Endothelial cell of umbilical vein (primary cell): ENCODE measurements at regions of chr6 and their contacts with region 1.

Region 1: GRCh38 chr6:44172731-44173500 is 14.3 kb downstream of the CAPN11 start:
- DNase-seq: peak; percentile 71
- H3K4me3 ChIP-seq: no peak overlapping the region
- H3K27ac ChIP-seq: no peak overlapping the region
- H3K4me1 ChIP-seq: peaks cover 19% of the 10 kb centered on the region
- H3K27me3 ChIP-seq: peaks cover 0 to 9% of the 10 kb centered on the region in 2 experiments
- CTCF ChIP-seq: peak; percentile 91 to 96
- POLR2A ChIP-seq: no peak

Region 2: DNA sequence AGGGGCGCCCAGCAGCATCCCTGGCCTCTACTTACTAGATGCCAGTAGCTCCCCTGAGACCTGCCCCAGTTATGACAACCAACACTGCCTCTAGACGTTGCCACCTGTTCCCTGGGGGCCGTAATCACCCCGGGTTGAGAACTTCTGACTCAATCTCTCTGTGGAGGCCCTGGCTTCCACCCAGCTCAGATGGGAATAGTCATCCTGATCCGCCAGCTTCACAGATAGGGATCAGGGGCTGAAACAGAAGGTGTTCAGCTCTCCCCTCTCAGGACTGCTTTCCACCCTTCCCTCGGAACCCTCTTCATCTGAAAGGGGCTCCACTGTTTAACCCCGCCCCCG is 10.9 kb before region 1 on chr6:
- CTCF ChIA-PET with region 1: interaction called, 23 read pairs
- POLR2A ChIA-PET with region 1: no interaction called
- dilution Hi-C with region 1: no loop called
- intact Hi-C with region 1: no loop called
- DNase-seq: no peak
- H3K4me3 ChIP-seq: no peak overlapping the region
- H3K27ac ChIP-seq: no peak overlapping the region
- H3K4me1 ChIP-seq: no peaks in the 10 kb centered on the region
- H3K27me3 ChIP-seq: peaks cover 2 to 19% of the 10 kb centered on the region in 2 experiments
- CTCF ChIP-seq: no peak
- POLR2A ChIP-seq: no peak

Region 3: DNA sequence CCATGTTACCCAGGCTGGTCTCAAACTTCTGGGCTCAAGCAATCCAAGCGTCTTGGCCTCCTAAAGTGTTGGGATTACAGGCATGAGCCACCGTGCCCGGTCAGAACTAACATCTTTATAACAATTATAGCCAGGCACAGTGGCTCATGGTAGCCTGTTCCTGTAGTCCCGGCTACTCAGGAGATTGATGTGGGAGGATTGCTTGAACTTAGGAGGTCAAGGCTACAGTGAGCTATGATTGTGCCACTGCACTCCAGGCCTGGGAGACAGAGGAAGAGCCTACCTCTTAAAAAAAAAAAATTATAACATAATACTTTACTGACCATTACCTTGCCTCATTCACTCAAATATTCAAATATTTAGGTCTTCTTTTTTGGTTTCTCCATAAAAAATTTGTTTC is 27.0 kb after region 1 on chr6:
- CTCF ChIA-PET with region 1: interaction called, 5 read pairs
- POLR2A ChIA-PET with region 1: interaction called, 3 read pairs
- dilution Hi-C with region 1: no loop called
- intact Hi-C with region 1: loop called (anchors 1 kb)
- DNase-seq: no peak
- H3K4me3 ChIP-seq: no peak overlapping the region
- H3K27ac ChIP-seq: no peak overlapping the region
- H3K4me1 ChIP-seq: peaks cover 14% of the 10 kb centered on the region
- H3K27me3 ChIP-seq: no peaks in the 10 kb centered on the region
- CTCF ChIP-seq: no peak
- POLR2A ChIP-seq: no peak

Region 4: DNA sequence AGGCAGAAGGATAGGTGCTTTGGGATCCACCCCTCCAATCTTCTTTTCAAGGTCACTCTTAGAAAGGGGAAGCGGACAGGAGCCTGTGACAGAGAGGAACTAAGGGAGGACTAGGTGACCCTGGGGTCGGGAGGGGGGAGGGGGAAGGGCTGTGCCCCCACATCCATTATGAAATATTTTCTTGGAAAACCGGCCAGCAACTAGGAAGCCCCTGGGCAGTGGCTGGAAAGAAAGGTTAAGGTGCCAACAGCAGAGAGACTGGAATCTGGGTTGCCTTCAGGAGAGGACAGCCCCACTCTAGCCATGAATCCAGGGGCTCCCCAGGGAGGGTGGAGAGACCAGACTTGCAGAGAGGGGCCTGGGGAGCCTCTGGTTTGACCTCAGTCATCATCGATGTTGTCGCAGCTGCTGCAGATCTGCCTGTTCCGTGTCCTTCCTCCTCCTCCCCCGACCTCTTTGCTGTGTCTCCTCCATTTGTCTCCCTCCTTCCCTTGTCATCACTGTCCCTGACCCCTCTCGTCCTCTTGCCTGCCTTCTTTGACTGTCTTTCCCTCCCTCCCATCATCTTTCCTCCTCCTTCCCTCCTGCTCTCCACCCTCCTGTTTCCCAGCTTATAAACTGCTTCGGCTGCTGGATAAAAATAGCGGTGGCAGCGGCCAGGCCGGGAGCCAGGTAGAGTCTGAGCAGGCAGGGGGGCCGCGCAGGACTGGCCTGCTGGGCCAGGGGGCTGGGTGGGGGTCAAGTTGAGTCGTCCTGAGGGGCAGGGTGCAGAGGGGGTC is 53.6 kb after region 1 on chr6:
- CTCF ChIA-PET with region 1: interaction called, 91 read pairs
- POLR2A ChIA-PET with region 1: interaction called, 9 read pairs
- dilution Hi-C with region 1: no loop called
- intact Hi-C with region 1: loop called (anchors 1 kb)
- DNase-seq: no peak
- H3K4me3 ChIP-seq: no peak overlapping the region
- H3K27ac ChIP-seq: no peak overlapping the region
- H3K4me1 ChIP-seq: peaks cover 36% of the 10 kb centered on the region
- H3K27me3 ChIP-seq: no peaks in the 10 kb centered on the region
- CTCF ChIP-seq: no peak
- POLR2A ChIP-seq: no peak

Region 5: DNA sequence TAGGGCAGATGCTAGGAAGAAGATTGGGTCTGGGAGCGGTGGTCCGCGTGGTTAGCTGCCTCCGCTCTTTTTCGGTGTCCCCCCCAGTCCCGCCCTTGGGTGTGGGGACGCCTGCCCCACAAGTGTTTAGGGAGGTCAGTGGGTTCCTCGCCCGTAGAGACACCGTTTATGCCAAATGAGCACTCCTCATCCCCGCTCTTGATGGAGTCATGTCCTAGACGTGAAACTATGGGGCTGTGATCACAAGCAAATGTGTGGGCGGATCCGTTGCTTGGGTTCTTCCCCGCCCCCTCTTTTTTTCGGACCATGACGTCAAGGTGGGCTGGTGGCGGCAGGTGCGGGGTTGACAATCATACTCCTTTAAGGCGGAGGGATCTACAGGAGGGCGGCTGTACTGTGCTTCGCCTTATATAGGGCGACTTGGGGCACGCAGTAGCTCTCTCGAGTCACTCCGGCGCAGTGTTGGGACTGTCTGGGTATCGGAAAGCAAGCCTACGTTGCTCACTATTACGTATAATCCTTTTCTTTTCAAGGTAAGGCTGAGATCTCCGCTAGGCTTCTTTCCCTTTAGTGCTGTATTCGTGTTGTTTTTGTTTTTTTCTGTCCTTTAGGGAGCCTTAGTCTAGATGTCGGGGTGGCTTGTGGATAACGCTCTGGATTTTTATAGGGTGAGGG is 73.9 kb after region 1 on chr6 and contains the start of gene HSP90AB1:
- CTCF ChIA-PET with region 1: interaction called, 19 read pairs
- POLR2A ChIA-PET with region 1: interaction called, 9 read pairs
- dilution Hi-C with region 1: no loop called
- intact Hi-C with region 1: loop called (anchors 2 kb)
- DNase-seq: peak; percentile 98
- H3K4me3 ChIP-seq: peak within 1 kb of the TSS; percentile 54 to 85 (median 76)
- H3K27ac ChIP-seq: peak within 1 kb of the TSS; percentile 65
- H3K4me1 ChIP-seq: peaks cover 26% of the 10 kb centered on the region
- H3K27me3 ChIP-seq: no peaks in the 10 kb centered on the region
- CTCF ChIP-seq: no peak
- POLR2A ChIP-seq: peak; percentile 100
- total RNA-seq, gene HSP90AB1: 1,088 and 1,201 TPM in 2 replicates

Region 6: DNA sequence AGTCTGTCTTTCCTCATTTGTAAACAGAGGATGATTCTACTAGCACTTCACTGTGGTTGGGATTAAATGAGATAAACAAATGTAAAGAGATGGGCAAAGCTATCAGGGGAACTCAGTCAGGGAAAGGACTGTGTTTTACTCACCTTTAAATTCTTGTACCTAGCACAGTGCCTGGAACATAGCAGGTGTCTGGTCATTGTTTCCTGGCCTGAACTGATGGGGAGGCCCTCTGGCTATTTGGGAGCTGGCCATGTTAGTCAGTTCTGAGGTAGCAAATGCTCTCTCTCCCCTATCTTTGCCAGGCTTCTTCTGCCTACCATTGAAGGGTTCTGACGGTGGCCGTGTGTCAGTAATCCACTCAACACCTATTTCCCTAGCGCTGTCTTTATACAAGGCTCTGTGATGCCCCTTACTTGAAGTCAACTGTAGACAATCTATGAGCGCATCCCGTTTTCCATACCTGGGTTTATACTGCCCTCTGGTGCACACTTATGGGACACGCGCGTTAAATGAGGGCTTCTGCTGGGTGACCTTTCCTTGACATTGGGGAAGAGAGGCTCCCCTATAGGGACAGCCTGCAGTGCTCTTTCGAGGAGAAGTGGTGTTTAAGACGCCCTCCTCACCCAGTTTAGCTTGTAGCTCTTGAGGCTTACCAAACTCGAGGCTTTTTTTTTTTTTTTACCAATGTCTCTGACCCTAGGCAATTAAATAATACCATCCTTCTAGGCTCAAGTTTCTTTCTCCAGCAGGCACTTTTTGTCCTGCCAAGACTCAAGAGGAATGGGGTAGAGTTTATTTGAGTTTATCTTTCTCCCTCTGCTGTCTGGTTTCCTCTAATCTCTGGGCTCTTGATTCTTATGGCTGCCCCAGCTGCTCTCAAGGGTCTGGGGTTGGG is 165.6 kb after region 1 on chr6:
- CTCF ChIA-PET with region 1: interaction called, 9 read pairs
- POLR2A ChIA-PET with region 1: no interaction called
- dilution Hi-C with region 1: no loop called
- intact Hi-C with region 1: loop called (anchors 1 kb)
- DNase-seq: peak; percentile 63
- H3K4me3 ChIP-seq: no peak overlapping the region
- H3K27ac ChIP-seq: no peak overlapping the region
- H3K4me1 ChIP-seq: no peaks in the 10 kb centered on the region
- H3K27me3 ChIP-seq: peaks cover 28 to 44% of the 10 kb centered on the region in 2 experiments
- CTCF ChIP-seq: peak; percentile 57 to 72
- POLR2A ChIP-seq: no peak